Activated B cell treated with CpG ODN at 0.5 μM for 24 hours (primary cell): ENCODE measurements at regions of chr20 and their contacts with region 1.

Region 1: DNA sequence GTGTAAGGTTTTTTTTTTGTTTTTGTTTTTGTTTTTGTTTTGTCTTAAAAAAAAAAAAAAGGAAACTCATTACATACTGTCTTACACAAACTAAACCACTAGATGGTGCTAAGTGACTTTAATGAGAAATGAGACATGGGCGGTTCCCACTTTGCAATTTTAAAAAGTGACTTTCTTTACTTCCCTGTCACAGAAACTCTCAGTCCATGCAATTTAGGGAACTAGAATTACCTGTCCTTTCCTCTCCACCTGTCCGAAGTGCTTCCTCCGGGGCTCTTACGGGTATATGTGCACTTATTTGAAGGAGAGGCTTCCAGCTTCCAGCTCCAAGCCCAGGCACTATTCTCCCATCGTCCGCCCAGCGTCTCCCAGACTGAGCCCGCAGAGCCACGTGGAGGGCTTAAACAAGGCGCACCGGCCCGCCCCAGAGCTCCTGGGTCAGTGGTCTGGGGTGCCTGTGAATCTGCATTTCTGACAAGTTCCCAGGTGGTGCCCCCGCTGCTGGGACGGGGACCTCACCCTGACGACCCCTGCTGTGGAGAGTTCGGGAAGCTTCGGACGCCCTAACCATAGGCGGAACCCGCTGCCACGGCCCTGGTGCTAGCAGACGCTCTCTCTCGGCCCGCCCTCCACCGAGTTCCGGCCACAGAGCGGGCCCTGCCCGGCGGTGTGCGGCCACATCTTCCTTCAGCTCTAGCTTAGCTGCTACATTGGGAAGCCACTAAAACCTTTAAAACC is 26.1 kb downstream of the BFSP1 start:
- DNase-seq: peak; percentile 51
- ATAC-seq: peak; percentile 84
- H3K4me3 Mint-ChIP-seq: peak overlapping the region; percentile 91
- H3K27ac Mint-ChIP-seq: peak overlapping the region; percentile 85
- H3K4me1 Mint-ChIP-seq: peaks cover 9% of the 10 kb centered on the region
- H3K27me3 Mint-ChIP-seq: peaks cover 12% of the 10 kb centered on the region
- CTCF ChIP-seq: peak; percentile 56

Region 2: DNA sequence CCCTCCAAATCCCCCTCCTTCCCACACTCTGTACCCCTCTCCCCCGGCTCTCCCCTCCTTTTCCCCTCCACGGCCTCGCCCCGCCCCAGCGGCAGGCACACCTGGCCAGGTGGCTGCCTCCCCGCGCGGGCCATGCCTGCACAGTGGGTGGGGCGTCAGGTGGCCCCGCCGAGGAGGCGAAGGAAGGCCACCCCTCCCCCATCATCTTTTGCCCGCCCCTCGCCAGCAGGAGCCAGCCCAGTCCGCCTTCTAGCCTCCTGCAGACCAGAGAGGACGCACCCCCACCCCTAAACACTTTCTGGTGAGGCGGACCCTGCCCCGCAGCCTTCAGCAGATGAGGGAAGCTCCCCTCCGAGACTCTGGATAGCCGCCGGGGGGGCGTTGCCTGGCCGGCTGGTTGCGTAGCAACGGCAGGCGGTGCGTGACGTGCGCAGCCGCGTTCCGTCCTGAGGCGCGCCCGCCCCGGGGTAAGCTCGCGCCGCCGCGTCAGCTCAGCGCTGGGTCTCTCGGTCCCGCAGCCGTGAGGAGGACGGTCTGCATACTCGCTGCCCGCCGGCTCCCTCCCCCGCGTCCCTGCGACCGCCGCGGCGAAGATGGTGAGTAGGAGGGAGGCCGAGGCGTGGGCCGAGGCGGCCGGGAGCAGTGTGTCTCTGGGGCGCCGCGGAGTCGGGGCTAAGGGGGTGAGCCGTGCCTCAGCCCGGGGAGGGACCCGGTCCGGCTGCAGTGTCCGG is 64.7 kb after region 1 on chr20 and contains the start of gene DSTN:
- CTCF ChIA-PET with region 1: interaction called, 3 read pairs
- POLR2A ChIA-PET with region 1: no interaction called
- intact Hi-C with region 1: loop called (anchors 2 kb)
- DNase-seq: peak; percentile 88
- ATAC-seq: peak; percentile 89
- H3K4me3 Mint-ChIP-seq: peak within 1 kb of the TSS; percentile 93
- H3K27ac Mint-ChIP-seq: peak within 1 kb of the TSS; percentile 85
- H3K4me1 Mint-ChIP-seq: peaks cover 16% of the 10 kb centered on the region
- H3K27me3 Mint-ChIP-seq: peaks cover 2% of the 10 kb centered on the region
- CTCF ChIP-seq: no peak
- total RNA-seq, gene DSTN: 14.4 and 20.1 TPM in 2 replicates

Region 3: GRCh38 chr20:17648791-17649730 is 144.0 kb after region 1 on chr20:
- CTCF ChIA-PET with region 1: interaction called, 12 read pairs
- POLR2A ChIA-PET with region 1: no interaction called
- intact Hi-C with region 1: loop called (anchors 1 kb)
- DNase-seq: no peak
- ATAC-seq: peak; percentile 75
- H3K4me3 Mint-ChIP-seq: peak overlapping the region; percentile 15
- H3K27ac Mint-ChIP-seq: no peak overlapping the region
- H3K4me1 Mint-ChIP-seq: peaks cover 25% of the 10 kb centered on the region
- H3K27me3 Mint-ChIP-seq: no peaks in the 10 kb centered on the region
- CTCF ChIP-seq: no peak

Region 4: DNA sequence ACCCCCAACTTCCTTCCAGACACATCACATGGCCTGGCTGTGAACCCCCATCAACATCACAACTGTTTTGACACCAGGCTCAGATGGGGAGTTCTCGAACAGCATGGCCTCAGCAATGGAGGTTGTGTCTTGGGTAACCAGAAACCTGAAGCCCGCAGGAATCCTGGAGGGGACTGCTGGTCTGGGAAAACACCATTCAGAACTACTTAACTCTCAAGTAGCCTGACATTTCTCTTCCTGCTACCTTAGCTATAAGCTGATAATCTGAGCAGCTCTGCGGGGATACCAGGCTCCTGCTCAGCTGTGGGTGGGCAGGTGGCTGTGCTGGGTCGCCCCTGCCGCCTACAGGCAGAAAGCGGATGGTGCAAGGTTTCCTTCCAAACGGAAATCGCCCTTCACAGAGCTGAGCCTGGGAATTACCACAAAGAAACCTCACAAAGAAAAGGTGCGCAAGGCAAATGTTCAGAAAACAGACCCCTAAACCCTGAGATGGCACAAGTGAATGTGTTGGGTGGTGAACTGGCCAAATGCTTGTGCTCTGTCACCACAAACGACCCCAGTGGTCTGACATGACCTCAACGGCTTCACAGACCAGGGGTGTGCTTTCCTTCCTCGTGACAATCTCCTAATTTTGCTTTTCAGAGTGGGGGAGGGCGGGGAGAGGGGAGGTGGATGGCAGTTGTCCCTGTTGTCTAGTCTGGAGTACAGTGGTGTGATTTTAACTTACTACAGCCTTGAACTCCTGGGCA is 434.0 kb after region 1 on chr20:
- CTCF ChIA-PET with region 1: interaction called, 11 read pairs
- POLR2A ChIA-PET with region 1: no interaction called
- intact Hi-C with region 1: loop called (anchors 1 kb)
- DNase-seq: peak; percentile 48
- ATAC-seq: peak; percentile 88
- H3K4me3 Mint-ChIP-seq: no peak overlapping the region
- H3K27ac Mint-ChIP-seq: no peak overlapping the region
- H3K4me1 Mint-ChIP-seq: peaks cover 33% of the 10 kb centered on the region
- H3K27me3 Mint-ChIP-seq: no peaks in the 10 kb centered on the region
- CTCF ChIP-seq: peak; percentile 55

Region 5: GRCh38 chr20:18019070-18019469 is 514.0 kb after region 1 on chr20:
- CTCF ChIA-PET with region 1: interaction called, 3 read pairs
- POLR2A ChIA-PET with region 1: no interaction called
- intact Hi-C with region 1: loop called (anchors 1 kb)
- DNase-seq: no peak
- ATAC-seq: peak; percentile 78
- H3K4me3 Mint-ChIP-seq: no peak overlapping the region
- H3K27ac Mint-ChIP-seq: no peak overlapping the region
- H3K4me1 Mint-ChIP-seq: peaks cover 3% of the 10 kb centered on the region
- H3K27me3 Mint-ChIP-seq: no peaks in the 10 kb centered on the region
- CTCF ChIP-seq: no peak

Region 6: GRCh38 chr20:18466894-18467730 is 962.0 kb after region 1 on chr20 and contains the starts of genes DZANK1 and POLR3F:
- CTCF ChIA-PET with region 1: no interaction called
- POLR2A ChIA-PET with region 1: no interaction called
- intact Hi-C with region 1: loop called (anchors 5 kb)
- DNase-seq: peak; percentile 88
- ATAC-seq: peak; percentile 96
- H3K4me3 Mint-ChIP-seq: peak within 1 kb of the TSS; percentile 99
- H3K27ac Mint-ChIP-seq: peak within 1 kb of the TSS; percentile 95
- H3K4me1 Mint-ChIP-seq: peaks cover 27% of the 10 kb centered on the region
- H3K27me3 Mint-ChIP-seq: no peaks in the 10 kb centered on the region
- CTCF ChIP-seq: no peak
- total RNA-seq, gene DZANK1: 5.3 and 6.0 TPM in 2 replicates
- total RNA-seq, gene POLR3F: 13.3 and 14.5 TPM in 2 replicates